CD14-positive monocyte (primary cell): ENCODE measurements at regions of chr12 and their contacts with region 1.

Region 1: GRCh38 chr12:56127888-56128669 is at the start of gene ESYT1:
- DNase-seq: peak; percentile 99
- H3K4me3 ChIP-seq: peak within 1 kb of the TSS; percentile 60 to 99 (median 94)
- H3K4me3 Mint-ChIP-seq: peak within 1 kb of the TSS; percentile 95 to 98
- H3K27ac ChIP-seq: peak within 1 kb of the TSS; percentile 54 to 78
- H3K27ac Mint-ChIP-seq: peak within 1 kb of the TSS; percentile 84 to 94 (median 93)
- H3K4me1 ChIP-seq: peaks cover 55 to 68% of the 10 kb centered on the region in 2 donors
- H3K4me1 Mint-ChIP-seq: peaks cover 59% of the 10 kb centered on the region
- H3K27me3 ChIP-seq: no peaks in the 10 kb centered on the region
- H3K27me3 Mint-ChIP-seq: peaks cover 0 to 6% (median 1%) of the 10 kb centered on the region in 3 donors
- CTCF ChIP-seq: no peak
- polyA plus RNA-seq, gene ESYT1: 74.2 to 81.1 (median 74.6) TPM

Region 2: DNA sequence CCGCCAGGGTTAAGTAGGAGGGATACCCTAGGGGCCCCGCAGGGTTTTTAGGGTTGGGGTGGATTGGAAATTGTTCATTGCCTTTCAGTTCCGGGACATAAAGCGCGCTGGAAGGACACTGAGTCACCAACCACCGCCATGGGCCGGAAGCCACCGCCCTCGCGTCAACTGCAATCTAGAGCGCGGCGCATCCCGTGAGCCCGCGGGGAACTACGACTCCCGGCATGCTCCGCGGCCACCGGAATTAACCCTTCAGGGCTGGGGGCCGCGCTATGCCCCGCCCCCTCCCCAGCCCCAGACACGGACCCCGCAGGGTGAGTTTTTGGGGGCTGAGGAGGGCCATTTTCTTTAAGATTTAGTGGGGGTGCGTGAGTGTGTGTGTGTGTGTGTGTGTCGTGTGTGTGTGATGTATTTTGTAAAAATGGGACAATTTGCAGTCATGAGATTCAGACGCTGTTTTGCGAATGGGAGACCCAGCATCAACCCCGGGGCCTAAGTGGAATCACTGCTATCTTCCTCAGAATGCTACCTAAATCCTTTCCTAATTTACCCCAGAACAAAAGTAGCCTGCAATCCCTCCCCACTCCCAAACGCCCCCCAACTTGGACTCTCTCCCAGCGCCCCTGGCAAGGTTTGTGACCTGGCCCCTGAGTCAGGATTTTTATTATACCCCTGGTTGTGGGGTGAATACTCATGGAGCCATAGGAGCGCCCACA is 24.4 kb after region 1 on chr12 and contains the start of gene MYL6B:
- intact Hi-C with region 1: loop called in 1 of 2 experiments (anchors 2 kb)
- DNase-seq: peak; percentile 90 to 93 (median 93)
- H3K4me3 ChIP-seq: peak within 1 kb of the TSS; percentile 68 to 83 (median 68)
- H3K4me3 Mint-ChIP-seq: peak within 1 kb of the TSS; percentile 85 to 91
- H3K27ac ChIP-seq: peak within 1 kb of the TSS; percentile 86 to 90
- H3K27ac Mint-ChIP-seq: peak within 1 kb of the TSS; percentile 94 to 97 (median 97)
- H3K4me1 ChIP-seq: peaks cover 37 to 41% of the 10 kb centered on the region in 2 donors
- H3K4me1 Mint-ChIP-seq: peaks cover 35% of the 10 kb centered on the region
- H3K27me3 ChIP-seq: no peaks in the 10 kb centered on the region
- H3K27me3 Mint-ChIP-seq: peaks cover 0 to 4% (median 3%) of the 10 kb centered on the region in 3 donors
- CTCF ChIP-seq: no peak
- polyA plus RNA-seq, gene MYL6B: 2.7 to 4.3 (median 4.1) TPM

Region 3: GRCh38 chr12:56158029-56158925 is 30.2 kb after region 1 on chr12 and contains the start of gene MYL6:
- intact Hi-C with region 1: loop called (anchors 2 to 5 kb)
- DNase-seq: peak; percentile 94 to 98 (median 97)
- H3K4me3 ChIP-seq: peak within 1 kb of the TSS; percentile 77 to 96 (median 84)
- H3K4me3 Mint-ChIP-seq: peak within 1 kb of the TSS; percentile 97 to 99
- H3K27ac ChIP-seq: peak within 1 kb of the TSS; percentile 90 to 94
- H3K27ac Mint-ChIP-seq: peak within 1 kb of the TSS; percentile 97 to 99 (median 98)
- H3K4me1 ChIP-seq: peaks cover 35 to 44% of the 10 kb centered on the region in 2 donors
- H3K4me1 Mint-ChIP-seq: peaks cover 38% of the 10 kb centered on the region
- H3K27me3 ChIP-seq: no peaks in the 10 kb centered on the region
- H3K27me3 Mint-ChIP-seq: peaks cover 0 to 3% (median 2%) of the 10 kb centered on the region in 3 donors
- CTCF ChIP-seq: no peak
- polyA plus RNA-seq, gene MYL6: 1,962 to 3,939 (median 3,189) TPM

Region 4: GRCh38 chr12:56224102-56224701 is 96.1 kb after region 1 on chr12 and contains the start of gene NABP2:
- intact Hi-C with region 1: loop called in 1 of 2 experiments (anchors 5 kb)
- DNase-seq: peak; percentile 87 to 96 (median 95)
- H3K4me3 ChIP-seq: peak within 1 kb of the TSS; percentile 40 to 96 (median 40)
- H3K4me3 Mint-ChIP-seq: peak within 1 kb of the TSS; percentile 76 to 85
- H3K27ac ChIP-seq: peak within 1 kb of the TSS in 1 of 2 donors; percentile 94
- H3K27ac Mint-ChIP-seq: peak within 1 kb of the TSS; percentile 89 to 99 (median 92)
- H3K4me1 ChIP-seq: peaks cover 44 to 48% of the 10 kb centered on the region in 2 donors
- H3K4me1 Mint-ChIP-seq: peaks cover 42% of the 10 kb centered on the region
- H3K27me3 ChIP-seq: no peaks in the 10 kb centered on the region
- H3K27me3 Mint-ChIP-seq: no peaks in the 10 kb centered on the region
- CTCF ChIP-seq: peak; percentile 90
- polyA plus RNA-seq, gene NABP2: 2.7 to 10.1 (median 3.2) TPM

Region 5: DNA sequence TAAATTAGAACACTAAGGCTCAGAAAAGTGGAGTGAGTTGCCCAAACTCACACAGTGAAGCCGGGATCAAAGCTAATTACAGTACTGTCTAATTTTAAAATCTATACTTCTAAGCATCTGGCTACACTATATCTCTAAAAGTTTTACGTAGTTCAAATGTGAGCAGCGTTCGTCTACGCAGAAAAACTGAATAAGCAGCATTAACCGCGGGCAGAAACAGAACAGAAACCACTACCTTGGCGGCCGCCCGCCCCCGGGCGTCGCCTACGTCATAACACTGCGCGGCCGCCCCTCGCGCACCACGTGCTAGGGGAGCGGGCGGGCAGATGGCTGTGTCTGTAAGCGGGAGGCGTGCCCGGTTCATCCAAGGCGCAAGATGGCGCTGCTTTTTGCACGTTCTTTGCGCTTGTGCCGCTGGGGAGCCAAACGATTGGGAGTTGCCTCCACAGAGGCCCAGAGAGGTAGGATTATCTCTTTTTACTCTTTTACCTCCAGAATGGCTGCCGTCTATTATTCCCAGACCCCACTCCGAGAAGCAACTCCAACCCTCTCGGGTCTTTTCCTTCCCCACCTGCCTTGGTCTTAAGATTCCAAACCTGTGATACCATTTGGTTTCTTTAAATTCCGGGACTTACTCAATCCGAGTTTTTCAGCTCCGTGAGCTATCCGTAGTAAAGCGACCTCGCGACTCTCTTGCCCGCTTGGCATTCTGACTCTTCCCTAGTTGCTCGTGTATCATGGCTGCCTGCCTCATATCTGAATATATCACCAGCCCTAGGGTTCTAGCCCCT is 340.3 kb after region 1 on chr12 and contains the start of gene SPRYD4:
- intact Hi-C with region 1: loop called (anchors 10 kb)
- DNase-seq: peak; percentile 94
- H3K4me3 ChIP-seq: peak within 1 kb of the TSS; percentile 89 to 94 (median 92)
- H3K4me3 Mint-ChIP-seq: peak within 1 kb of the TSS; percentile 88 to 96
- H3K27ac ChIP-seq: peak within 1 kb of the TSS; percentile 71 to 93
- H3K27ac Mint-ChIP-seq: peak within 1 kb of the TSS; percentile 89 to 97 (median 94)
- H3K4me1 ChIP-seq: peaks cover 27 to 31% of the 10 kb centered on the region in 2 donors
- H3K4me1 Mint-ChIP-seq: peaks cover 30% of the 10 kb centered on the region
- H3K27me3 ChIP-seq: no peaks in the 10 kb centered on the region
- H3K27me3 Mint-ChIP-seq: peaks cover 0 to 2% (median 0%) of the 10 kb centered on the region in 3 donors
- CTCF ChIP-seq: no peak
- polyA plus RNA-seq, gene SPRYD4: 1.3 to 2.1 (median 1.4) TPM